HEK293 (cell line): ENCODE measurements at regions of chr1 and their contacts with region 1.

Region 1: GRCh38 chr1:207499573-207499972 is 3.6 kb downstream of the CR1 start:
- H3K4me3 ChIP-seq: no peak overlapping the region
- H3K27ac ChIP-seq: no peak overlapping the region
- H3K4me1 ChIP-seq: no peaks in the 10 kb centered on the region
- CTCF ChIP-seq: 0 out of 2 replicates have a peak, but pooled peaks have one; percentile 56

Region 2: DNA sequence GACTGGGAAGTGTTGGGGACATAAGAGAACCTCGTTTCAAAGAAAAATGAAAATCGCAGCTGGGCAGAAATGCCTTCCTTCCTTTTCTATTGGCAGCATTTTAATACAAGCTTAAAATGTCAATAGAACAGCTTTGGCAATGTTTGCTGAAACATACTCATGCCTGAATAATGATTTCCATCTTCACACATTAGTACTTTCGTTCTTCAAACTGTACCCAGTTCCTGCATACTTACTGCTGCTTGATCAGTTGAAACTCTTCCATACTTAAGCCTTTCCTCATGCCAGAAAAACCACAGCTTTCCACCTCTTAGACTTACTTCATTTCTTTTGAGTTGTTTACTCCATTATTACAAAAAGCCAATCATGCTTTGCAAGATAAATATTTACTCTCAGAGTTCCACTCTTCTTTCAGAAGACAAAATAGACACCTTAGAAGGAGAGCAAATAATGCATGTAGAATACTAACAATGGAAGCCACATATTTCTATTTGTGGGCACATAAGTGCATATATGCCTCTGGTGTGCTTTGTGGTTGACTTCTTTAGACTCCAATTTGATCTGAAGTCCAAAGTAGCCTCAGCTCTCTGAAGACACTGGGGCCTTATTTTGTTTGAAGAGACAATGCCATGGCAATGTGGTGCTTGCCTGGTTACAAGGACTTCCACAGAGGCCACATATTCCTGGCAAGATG is 200.8 kb before region 1 on chr1:
- CTCF ChIA-PET with region 1: no interaction called
- POLR2A ChIA-PET with region 1: no interaction called
- H3K4me3 ChIP-seq: no peak overlapping the region
- H3K27ac ChIP-seq: no peak overlapping the region
- H3K4me1 ChIP-seq: no peaks in the 10 kb centered on the region
- CTCF ChIP-seq: no peak

Region 3: DNA sequence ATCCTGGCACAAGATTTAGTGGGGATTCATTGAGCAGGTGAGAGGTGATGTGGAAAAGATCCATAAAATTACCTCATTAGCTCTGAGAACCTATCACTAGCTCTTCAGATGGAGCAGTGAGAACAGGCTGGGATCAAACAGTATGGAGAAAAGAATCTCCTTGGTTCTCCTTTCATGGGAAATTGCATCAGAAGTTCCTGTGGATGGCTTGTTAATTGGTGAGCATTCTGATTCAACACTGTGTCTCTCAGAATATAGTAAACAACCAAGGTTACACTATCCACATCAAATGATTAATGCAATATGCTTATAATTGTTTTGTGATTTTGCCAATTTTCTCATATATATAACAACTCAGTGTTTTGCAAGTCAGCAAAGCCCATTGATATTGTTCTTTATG is 186.4 kb before region 1 on chr1:
- CTCF ChIA-PET with region 1: no interaction called
- POLR2A ChIA-PET with region 1: no interaction called
- H3K4me3 ChIP-seq: no peak overlapping the region
- H3K27ac ChIP-seq: no peak overlapping the region
- H3K4me1 ChIP-seq: no peaks in the 10 kb centered on the region
- CTCF ChIP-seq: no peak

Region 4: GRCh38 chr1:207454046-207454964 is 45.3 kb before region 1 on chr1 and contains the start of gene CR2:
- CTCF ChIA-PET with region 1: interaction called, 16 read pairs
- POLR2A ChIA-PET with region 1: no interaction called
- H3K4me3 ChIP-seq: peak within 1 kb of the TSS; percentile 58
- H3K27ac ChIP-seq: no peak within 1 kb of the TSS; the same call in 1 of the 2 replicates
- H3K4me1 ChIP-seq: no peaks in the 10 kb centered on the region
- CTCF ChIP-seq: peak; percentile 89

Region 5: DNA sequence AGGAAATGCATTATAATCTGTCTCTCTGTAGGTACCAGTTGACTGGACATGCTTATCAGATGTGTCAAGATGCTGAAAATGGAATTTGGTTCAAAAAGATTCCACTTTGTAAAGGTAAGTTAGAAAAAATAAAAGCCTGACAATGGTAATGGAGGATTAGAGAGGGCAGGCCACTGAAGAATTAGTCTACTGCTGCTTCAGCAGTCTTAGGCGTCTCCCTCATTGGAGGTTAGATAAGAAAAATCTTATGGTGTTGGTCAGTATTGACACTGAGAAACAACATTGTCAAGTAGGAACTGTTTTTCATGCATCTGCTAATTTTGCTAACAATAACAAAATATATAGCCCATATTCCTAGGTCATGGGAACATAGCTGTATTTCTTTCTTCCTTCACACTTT is 25.4 kb before region 1 on chr1:
- CTCF ChIA-PET with region 1: interaction called, 11 read pairs
- POLR2A ChIA-PET with region 1: no interaction called
- H3K4me3 ChIP-seq: no peak overlapping the region
- H3K27ac ChIP-seq: no peak overlapping the region
- H3K4me1 ChIP-seq: no peaks in the 10 kb centered on the region
- CTCF ChIP-seq: no peak

Region 6: GRCh38 chr1:207565546-207566358 is 66.2 kb after region 1 on chr1:
- CTCF ChIA-PET with region 1: interaction called, 11 read pairs
- POLR2A ChIA-PET with region 1: no interaction called
- H3K4me3 ChIP-seq: no peak overlapping the region
- H3K27ac ChIP-seq: no peak overlapping the region
- H3K4me1 ChIP-seq: no peaks in the 10 kb centered on the region
- CTCF ChIP-seq: no peak